ENCODE measurements at regions of chr1 and their contacts with region 1.

Region 1: DNA sequence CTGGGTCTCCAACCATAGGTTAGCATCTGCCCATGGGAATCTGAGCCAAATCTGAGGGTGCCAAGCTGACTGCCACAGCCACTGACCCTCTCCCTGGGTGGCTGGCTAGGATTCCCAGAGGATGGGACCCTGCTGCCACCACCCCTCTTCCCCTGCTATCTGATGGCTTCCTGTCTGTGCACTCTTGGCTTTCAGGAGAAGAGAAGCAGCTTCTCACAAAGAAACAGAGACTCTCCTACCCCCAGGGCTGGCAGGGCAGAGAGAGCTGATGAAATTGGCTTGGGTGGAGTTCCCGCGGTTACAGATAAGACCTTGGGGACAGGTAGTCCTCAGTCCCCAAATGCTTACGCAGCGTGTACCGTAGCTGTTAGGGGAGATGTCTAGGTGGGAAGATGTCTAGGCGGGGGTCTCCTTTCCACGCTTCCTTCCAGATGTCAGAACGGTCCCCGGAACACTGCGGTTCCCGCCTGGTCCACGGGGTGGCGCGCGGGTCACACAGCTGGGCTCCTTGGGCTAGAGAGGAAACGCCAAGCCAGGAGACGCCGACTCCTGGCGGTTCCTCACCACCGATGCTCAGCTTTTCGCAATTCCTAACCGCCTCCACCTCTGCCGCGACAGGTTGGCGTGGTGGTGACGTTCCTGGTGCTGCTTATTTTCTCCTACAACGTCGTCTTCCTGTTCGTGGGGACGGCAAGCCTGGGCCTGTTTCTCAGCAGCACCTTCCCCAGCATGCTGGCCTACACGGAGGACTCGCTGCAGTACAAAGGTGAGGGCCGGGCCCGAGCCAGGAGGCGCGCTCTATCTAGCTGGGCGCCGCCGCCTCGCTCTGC is 40.1 kb downstream of the ELK4 start:
- DNase-seq: peak; percentile 89
- H3K4me3 Mint-ChIP-seq: peak overlapping the region; percentile 81
- H3K27ac Mint-ChIP-seq: peak overlapping the region; percentile 89
- H3K4me1 Mint-ChIP-seq: peaks cover 47% of the 10 kb centered on the region
- H3K27me3 Mint-ChIP-seq: no peaks in the 10 kb centered on the region

Region 2: DNA sequence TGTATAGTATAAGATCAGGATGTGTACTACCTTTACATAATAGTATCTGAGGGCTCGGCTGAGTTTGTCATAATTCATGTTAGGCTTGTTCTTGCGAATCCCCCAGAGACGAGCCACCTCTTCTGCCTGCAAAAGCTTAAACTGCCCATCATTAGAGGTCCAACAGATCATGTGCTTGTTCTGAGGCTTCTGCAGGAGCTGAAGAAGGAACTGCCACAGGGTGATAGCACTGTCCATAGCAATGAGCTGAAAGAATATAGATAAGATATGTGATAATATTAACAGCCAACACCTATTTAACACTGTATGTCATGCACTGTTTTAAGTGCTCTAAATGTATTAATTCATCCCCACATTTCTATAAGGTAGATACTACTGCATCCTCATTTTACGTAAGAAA is 31.9 kb after region 1 on chr1:
- CTCF ChIA-PET with region 1: interaction called, 105 read pairs
- POLR2A ChIA-PET with region 1: interaction called, 3 read pairs
- DNase-seq: no peak
- H3K4me3 Mint-ChIP-seq: no peak overlapping the region
- H3K27ac Mint-ChIP-seq: no peak overlapping the region
- H3K4me1 Mint-ChIP-seq: peaks cover 48% of the 10 kb centered on the region
- H3K27me3 Mint-ChIP-seq: no peaks in the 10 kb centered on the region

Region 3: DNA sequence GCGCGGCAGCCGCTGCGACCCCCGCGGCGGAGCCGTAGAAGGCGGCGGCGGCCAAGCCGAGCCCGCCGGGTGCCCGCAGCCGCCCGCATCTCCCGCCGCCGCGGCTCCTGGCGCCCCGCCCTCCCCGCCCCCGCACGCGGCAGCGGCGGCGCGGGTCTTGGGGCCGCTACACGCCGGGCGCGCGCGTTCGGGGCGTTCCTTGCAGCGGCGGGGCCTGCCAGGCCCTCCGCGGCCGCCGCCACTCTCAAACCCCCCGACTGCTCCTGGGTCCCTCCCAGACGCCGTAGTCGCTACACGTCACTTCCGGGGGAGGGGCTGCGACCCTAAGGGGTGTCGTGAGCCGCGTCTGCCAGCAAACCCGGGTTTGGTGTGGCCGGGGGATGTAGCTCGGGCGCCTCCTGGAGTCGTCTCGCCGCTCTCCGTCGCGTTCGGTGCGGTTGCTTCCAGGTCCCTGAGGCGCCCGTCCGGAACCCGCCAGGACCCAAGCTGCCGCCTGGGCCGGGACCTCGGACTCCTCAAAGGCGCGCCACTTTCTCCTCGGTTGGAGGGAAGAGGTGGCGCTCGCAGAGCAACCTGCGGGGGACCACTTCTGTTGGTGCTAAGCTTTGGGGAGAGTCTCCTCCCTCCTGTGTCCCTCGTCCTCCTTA is 40.1 kb after region 1 on chr1 and contains the start of gene ELK4:
- CTCF ChIA-PET with region 1: interaction called, 105 read pairs
- POLR2A ChIA-PET with region 1: interaction called, 18 read pairs
- DNase-seq: peak; percentile 99
- H3K4me3 Mint-ChIP-seq: peak within 1 kb of the TSS; percentile 81
- H3K27ac Mint-ChIP-seq: peak within 1 kb of the TSS; percentile 95
- H3K4me1 Mint-ChIP-seq: peaks cover 39% of the 10 kb centered on the region
- H3K27me3 Mint-ChIP-seq: peaks cover 5% of the 10 kb centered on the region
- total RNA-seq, gene ELK4: 99.4 to 103 TPM

Region 4: GRCh38 chr1:205645519-205645918 is 53.8 kb after region 1 on chr1:
- CTCF ChIA-PET with region 1: interaction called, 15 read pairs
- POLR2A ChIA-PET with region 1: no interaction called
- DNase-seq: no peak
- H3K4me3 Mint-ChIP-seq: no peak overlapping the region
- H3K27ac Mint-ChIP-seq: no peak overlapping the region
- H3K4me1 Mint-ChIP-seq: no peaks in the 10 kb centered on the region
- H3K27me3 Mint-ChIP-seq: peaks cover 3% of the 10 kb centered on the region